GM12878 (cell line): ENCODE measurements at regions of chr9 and their contacts with region 1.

Region 1: DNA sequence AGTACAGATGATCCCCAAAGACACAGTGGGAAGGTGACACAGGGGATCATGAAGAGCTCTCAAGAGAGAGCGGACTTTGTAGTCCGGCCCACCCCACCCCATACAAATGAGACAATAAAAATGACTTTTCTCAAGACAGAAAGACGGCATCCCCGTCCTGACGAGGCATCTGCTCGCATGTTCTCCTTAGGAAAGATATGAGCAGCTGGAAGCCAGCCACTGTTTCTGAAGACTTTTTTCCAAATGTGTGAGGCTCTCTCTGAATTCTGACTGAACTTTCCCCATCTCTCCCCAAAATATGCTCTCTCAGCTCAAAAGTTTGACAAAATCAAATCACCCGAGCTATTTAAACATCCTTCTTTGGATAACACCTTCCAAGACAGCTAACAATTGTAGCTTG is 105.2 kb downstream of the RFK start:
- DNase-seq: no peak
- ATAC-seq: no peak
- H3K4me3 ChIP-seq: no peak overlapping the region
- H3K27ac ChIP-seq: no peak overlapping the region
- H3K4me1 ChIP-seq: no peaks in the 10 kb centered on the region; the same call in 1 of the 2 replicates
- H3K27me3 ChIP-seq: no peaks in the 10 kb centered on the region; a peak in 1 of 4 replicates
- CTCF ChIP-seq: no peak
- EP300 ChIP-seq: no peak
- POLR2A ChIP-seq: no peak
- RAD21 ChIP-seq: no peak

Region 2: DNA sequence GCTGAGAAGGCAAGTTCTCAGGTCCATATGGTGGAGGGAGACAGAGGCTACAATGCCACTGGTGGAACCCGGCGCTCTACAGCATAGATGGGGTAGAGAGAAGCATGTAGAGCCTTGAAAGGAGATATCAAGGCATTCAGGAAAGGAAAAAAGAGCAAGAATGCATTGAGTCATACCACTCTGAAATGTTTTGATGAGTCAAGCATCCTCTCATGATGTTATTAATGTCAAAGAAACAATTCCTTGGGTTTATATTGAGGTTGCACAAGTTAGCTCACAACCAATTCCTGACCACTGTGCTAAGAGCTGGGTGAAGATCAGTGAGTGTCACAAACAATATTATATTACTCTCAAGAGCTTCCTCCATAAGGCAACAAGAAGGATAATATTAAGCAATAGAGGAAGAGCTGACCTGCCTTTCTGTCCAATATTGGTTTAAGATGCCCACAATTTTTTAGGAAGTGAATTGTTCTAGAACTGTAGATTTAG is 72.8 kb before region 1 on chr9:
- CTCF ChIA-PET with region 1: no interaction called
- POLR2A ChIA-PET with region 1: no interaction called
- RAD21 ChIA-PET with region 1: no interaction called
- SMC1A ChIA-PET with region 1: no interaction called
- in situ Hi-C with region 1: loop called (anchors 5 kb)
- intact Hi-C with region 1: no loop called
- DNase-seq: no peak
- ATAC-seq: no peak
- H3K4me3 ChIP-seq: no peak overlapping the region
- H3K27ac ChIP-seq: no peak overlapping the region
- H3K4me1 ChIP-seq: no peaks in the 10 kb centered on the region
- H3K27me3 ChIP-seq: no peaks in the 10 kb centered on the region; a peak in 1 of 4 replicates
- CTCF ChIP-seq: no peak
- EP300 ChIP-seq: no peak
- POLR2A ChIP-seq: no peak
- RAD21 ChIP-seq: no peak

Region 3: GRCh38 chr9:76302947-76303940 is 14.2 kb after region 1 on chr9:
- CTCF ChIA-PET with region 1: interaction called, 28 read pairs
- POLR2A ChIA-PET with region 1: no interaction called
- RAD21 ChIA-PET with region 1: no interaction called
- SMC1A ChIA-PET with region 1: interaction called, 5 read pairs
- in situ Hi-C with region 1: no loop called
- intact Hi-C with region 1: no loop called
- DNase-seq: no peak
- ATAC-seq: peak; percentile 75
- H3K4me3 ChIP-seq: no peak overlapping the region
- H3K27ac ChIP-seq: no peak overlapping the region
- H3K4me1 ChIP-seq: no peaks in the 10 kb centered on the region
- H3K27me3 ChIP-seq: peaks cover 0 to 2% of the 10 kb centered on the region in 2 experiments; a peak in 2 of 4 replicates
- CTCF ChIP-seq: peak; percentile 47 to 52 (median 47); a peak in 4 of 6 replicates
- EP300 ChIP-seq: no peak
- POLR2A ChIP-seq: no peak
- RAD21 ChIP-seq: peak; percentile 91

Region 4: GRCh38 chr9:76542360-76542759 is 253.3 kb after region 1 on chr9:
- CTCF ChIA-PET with region 1: no interaction called
- POLR2A ChIA-PET with region 1: no interaction called
- RAD21 ChIA-PET with region 1: no interaction called
- SMC1A ChIA-PET with region 1: no interaction called
- in situ Hi-C with region 1: no loop called
- intact Hi-C with region 1: no loop called
- DNase-seq: no peak
- ATAC-seq: no peak
- H3K4me3 ChIP-seq: no peak overlapping the region
- H3K27ac ChIP-seq: no peak overlapping the region
- H3K4me1 ChIP-seq: no peaks in the 10 kb centered on the region
- H3K27me3 ChIP-seq: no peaks in the 10 kb centered on the region
- CTCF ChIP-seq: no peak
- EP300 ChIP-seq: no peak
- POLR2A ChIP-seq: no peak
- RAD21 ChIP-seq: no peak